Right cardiac atrium (tissue), 5 donors: ENCODE measurements at regions of chr12 and their contacts with region 1.

Region 1: DNA sequence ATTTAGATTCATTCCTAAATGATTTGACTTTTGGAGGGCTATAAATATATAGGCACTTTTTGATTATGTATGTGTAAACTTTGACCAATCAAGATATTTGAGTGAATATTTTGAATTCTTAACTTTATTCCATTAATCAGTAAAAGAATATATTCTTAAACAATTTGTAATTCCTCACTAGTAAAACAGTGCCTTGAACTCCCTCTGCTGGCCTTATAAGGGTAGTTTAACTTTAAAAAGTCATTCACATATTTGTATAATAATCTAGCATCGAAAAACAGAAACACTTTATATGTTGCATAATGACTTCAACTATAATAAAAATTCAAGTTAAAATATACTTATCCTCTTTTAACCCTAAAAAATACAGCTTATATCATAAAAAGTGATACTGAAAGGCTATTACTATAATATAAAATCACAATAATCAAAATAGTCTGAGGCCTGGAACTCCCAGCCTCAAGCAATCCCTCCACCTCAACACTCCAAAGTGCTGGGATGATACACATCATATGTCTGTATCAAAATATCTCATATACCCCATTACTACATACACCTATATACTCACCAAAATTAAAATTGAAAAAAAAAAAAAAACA is 31.2 kb downstream of the CCDC59 start:
- DNase-seq: no peak
- ATAC-seq: no peak
- H3K4me3 ChIP-seq: no peak overlapping the region
- H3K27ac ChIP-seq: no peak overlapping the region
- H3K4me1 ChIP-seq: no peaks in the 10 kb centered on the region
- H3K27me3 ChIP-seq: no peaks in the 10 kb centered on the region

Region 2: DNA sequence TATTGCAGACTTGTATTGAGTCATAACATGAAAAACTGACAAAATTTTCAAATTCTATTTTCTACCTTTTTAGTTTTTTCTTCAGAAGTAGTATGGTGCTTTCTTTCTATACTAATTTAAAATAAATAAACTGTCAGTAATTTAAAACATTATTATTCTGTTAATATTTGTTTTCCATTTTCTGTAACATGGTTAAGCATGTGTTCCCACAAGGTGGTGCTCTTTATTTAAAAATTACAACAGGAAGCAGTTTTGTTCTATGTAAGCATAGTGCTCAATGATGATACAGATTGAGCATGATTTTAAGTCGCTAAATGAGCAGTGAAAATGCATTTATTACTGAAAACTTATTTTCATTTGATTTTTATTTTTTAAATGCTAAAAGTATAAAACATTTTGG is 682.5 kb before region 1 on chr12:
- intact Hi-C with region 1: loop called (anchors 5 to 10 kb)
- DNase-seq: no peak
- ATAC-seq: no peak
- H3K4me3 ChIP-seq: no peak overlapping the region
- H3K27ac ChIP-seq: no peak overlapping the region
- H3K4me1 ChIP-seq: no peaks in the 10 kb centered on the region
- H3K27me3 ChIP-seq: no peaks in the 10 kb centered on the region

Region 3: GRCh38 chr12:82187011-82187410 is 140.0 kb before region 1 on chr12:
- intact Hi-C with region 1: no loop called
- DNase-seq: no peak
- ATAC-seq: no peak
- H3K4me3 ChIP-seq: no peak overlapping the region
- H3K27ac ChIP-seq: no peak overlapping the region
- H3K4me1 ChIP-seq: no peaks in the 10 kb centered on the region
- H3K27me3 ChIP-seq: no peaks in the 10 kb centered on the region

Region 4: DNA sequence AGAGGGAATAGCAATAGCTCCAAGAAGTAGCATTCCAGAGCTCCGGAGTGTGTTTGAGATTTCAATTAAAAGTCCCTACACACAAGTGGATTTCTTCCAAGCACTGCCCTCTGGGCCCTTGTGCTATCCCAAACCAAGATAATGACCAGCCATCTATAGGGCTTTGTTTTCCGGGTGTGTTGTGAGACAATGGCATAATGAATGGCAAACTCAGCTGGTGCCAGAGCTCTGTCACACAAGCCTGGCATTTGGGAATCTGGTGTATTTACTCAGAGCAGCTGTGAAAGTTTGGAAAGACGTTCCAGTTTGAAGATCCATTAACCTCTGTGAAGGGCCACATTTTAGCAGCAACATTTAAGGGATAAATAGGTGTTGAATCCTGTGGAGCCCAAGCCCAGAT is 298.5 kb after region 1 on chr12:
- intact Hi-C with region 1: no loop called
- DNase-seq: no peak
- ATAC-seq: no peak
- H3K4me3 ChIP-seq: no peak overlapping the region
- H3K27ac ChIP-seq: no peak overlapping the region
- H3K4me1 ChIP-seq: no peaks in the 10 kb centered on the region
- H3K27me3 ChIP-seq: no peaks in the 10 kb centered on the region